Activated T-helper 2 cell treated with anti-CD3 and anti-CD28 coated beads, Interferon-gamma antibody, Interleukin-2, Interleukin-4, amounts not matched to agents 10 μg/mL and 5 μg/mL and 100 μg/mL, durations not matched to agents 14 hours and 24 hours and 36 hours (primary cell): ENCODE measurements at regions of chr15 and their contacts with region 1.

Region 1: DNA sequence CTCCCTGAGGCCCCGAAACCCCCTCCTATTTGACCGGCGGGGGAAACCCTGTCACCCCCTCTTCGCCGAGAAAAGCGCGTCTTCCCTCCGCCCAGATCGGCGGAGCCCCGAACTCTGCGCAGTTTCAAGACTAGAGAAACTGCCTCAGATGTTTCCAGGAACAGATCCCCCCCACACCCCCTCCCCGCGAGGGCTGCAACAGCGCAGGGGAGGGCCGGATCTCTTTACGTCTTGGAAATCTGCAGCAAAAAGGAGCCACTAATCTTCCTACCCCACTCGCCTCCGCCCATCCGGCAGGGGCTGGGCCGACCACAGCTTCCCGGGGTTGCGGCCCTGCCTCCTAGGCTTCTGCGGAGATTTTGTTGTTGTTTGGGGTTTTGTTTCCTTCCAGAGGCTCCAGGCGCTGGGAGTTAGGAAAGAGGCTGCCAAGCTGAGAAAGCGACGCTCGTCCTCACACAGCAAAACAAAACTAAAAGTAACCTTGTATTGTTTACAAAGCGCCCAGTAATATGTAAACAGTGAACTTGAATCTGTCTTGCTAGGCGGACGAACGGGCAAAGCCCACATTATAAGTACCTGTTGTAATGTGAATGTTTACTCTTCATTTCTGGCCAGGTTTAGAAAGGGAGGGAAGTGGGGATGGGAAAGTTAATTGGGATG is 2.2 kb downstream of the FOXB1 start:
- DNase-seq: peak; percentile 84
- H3K4me3 Mint-ChIP-seq: peak overlapping the region; percentile 95
- H3K27ac Mint-ChIP-seq: peak overlapping the region; percentile 94
- H3K4me1 Mint-ChIP-seq: peaks cover 47% of the 10 kb centered on the region
- H3K27me3 Mint-ChIP-seq: peaks cover 65% of the 10 kb centered on the region

Region 2: GRCh38 chr15:59522988-59523461 is 483.3 kb before region 1 on chr15:
- intact Hi-C with region 1: no loop called
- DNase-seq: no peak
- H3K4me3 Mint-ChIP-seq: no peak overlapping the region
- H3K27ac Mint-ChIP-seq: no peak overlapping the region
- H3K4me1 Mint-ChIP-seq: peaks cover 13% of the 10 kb centered on the region
- H3K27me3 Mint-ChIP-seq: peaks cover 12% of the 10 kb centered on the region

Region 3: GRCh38 chr15:59879506-59880265 is 126.6 kb before region 1 on chr15:
- intact Hi-C with region 1: no loop called
- DNase-seq: no peak
- H3K4me3 Mint-ChIP-seq: no peak overlapping the region
- H3K27ac Mint-ChIP-seq: no peak overlapping the region
- H3K4me1 Mint-ChIP-seq: no peaks in the 10 kb centered on the region
- H3K27me3 Mint-ChIP-seq: peaks cover 11% of the 10 kb centered on the region

Region 4: DNA sequence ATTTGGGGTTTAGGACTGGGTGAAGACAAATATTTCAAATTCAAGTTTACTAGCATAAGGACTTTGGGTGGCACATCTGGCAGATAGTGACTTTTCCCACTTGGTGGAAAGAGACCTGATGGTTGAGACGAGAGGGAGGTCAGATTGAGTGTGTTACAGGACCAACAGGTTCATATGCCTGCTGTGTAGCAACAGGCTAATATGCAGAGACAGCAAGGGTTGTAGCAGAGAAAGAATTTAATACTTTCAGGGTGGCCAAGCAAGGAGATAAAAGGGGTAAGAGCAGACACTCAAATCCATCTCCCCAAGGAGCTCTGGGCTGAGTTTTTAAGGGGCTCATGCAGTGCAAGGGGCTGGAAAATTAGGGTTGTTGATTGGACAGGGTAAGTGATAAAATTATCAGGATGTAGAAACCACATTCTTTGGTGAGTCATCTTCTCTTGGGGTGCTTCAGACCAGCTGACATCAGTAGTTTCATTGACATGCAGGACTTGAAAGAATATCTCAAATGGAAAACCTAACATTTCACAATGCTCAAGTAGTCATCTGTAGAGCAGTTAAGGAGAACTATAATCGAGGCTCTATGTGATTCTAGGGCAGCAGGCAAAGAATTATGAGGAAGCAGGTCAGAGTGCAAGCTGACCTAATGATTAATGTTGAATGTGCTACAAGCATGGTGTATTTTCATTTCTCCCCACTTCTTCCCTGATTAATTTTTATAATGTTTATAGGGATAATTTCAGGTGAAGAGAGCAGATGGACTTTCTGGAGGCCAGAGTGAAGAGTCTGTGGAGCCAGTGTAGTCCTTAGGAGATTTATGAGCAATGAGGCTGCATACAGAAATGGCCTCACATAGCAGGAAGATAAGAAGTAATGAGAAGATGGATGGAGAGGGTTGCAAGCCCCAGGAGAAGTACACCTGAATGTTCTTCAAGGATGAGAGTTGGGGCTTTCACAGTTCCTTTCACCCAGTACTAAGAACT is 11.5 kb after region 1 on chr15:
- intact Hi-C with region 1: loop called (anchors 1 kb)
- DNase-seq: no peak
- H3K4me3 Mint-ChIP-seq: no peak overlapping the region
- H3K27ac Mint-ChIP-seq: peak overlapping the region; percentile 68
- H3K4me1 Mint-ChIP-seq: peaks cover 40% of the 10 kb centered on the region
- H3K27me3 Mint-ChIP-seq: peaks cover 14% of the 10 kb centered on the region

Region 5: GRCh38 chr15:60062826-60063225 is 56.5 kb after region 1 on chr15:
- intact Hi-C with region 1: no loop called
- DNase-seq: no peak
- H3K4me3 Mint-ChIP-seq: no peak overlapping the region
- H3K27ac Mint-ChIP-seq: no peak overlapping the region
- H3K4me1 Mint-ChIP-seq: no peaks in the 10 kb centered on the region
- H3K27me3 Mint-ChIP-seq: no peaks in the 10 kb centered on the region

Region 6: DNA sequence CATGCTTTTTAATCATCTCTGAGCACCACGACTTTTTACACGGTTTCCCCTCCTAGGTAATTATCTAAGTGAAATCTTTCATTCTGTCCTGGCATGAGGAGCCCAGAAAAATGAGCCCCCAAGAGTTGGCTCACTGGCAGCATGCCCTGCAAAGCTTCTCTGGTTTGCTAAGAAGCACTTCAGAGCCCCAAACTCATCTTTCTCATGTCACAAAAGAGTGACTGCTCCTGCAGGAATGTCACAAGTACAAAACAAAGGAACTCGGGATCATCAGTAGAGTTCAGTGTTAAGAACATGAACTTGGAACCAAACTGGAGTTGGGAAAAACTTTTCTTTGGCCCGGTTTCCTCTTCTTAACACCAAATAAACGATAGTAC is 121.7 kb after region 1 on chr15:
- intact Hi-C with region 1: loop called (anchors 2 kb)
- DNase-seq: no peak
- H3K4me3 Mint-ChIP-seq: peak overlapping the region; percentile 71
- H3K27ac Mint-ChIP-seq: peak overlapping the region; percentile 86
- H3K4me1 Mint-ChIP-seq: peaks cover 53% of the 10 kb centered on the region
- H3K27me3 Mint-ChIP-seq: peaks cover 9% of the 10 kb centered on the region

Region 7: GRCh38 chr15:60179786-60180391 is 173.6 kb after region 1 on chr15:
- intact Hi-C with region 1: no loop called
- DNase-seq: no peak
- H3K4me3 Mint-ChIP-seq: no peak overlapping the region
- H3K27ac Mint-ChIP-seq: no peak overlapping the region
- H3K4me1 Mint-ChIP-seq: peaks cover 4% of the 10 kb centered on the region
- H3K27me3 Mint-ChIP-seq: peaks cover 38% of the 10 kb centered on the region